Transverse colon (tissue), 4 donors: ENCODE measurements at regions of chr10 and their contacts with region 1.

Region 1: GRCh38 chr10:11687357-11688138 is 54.6 kb upstream of the ECHDC3 start:
- DNase-seq: peak; percentile 14
- H3K4me3 ChIP-seq: no peak overlapping the region
- H3K27ac ChIP-seq: no peak overlapping the region
- H3K4me1 ChIP-seq: peaks cover 0 to 34% (median 22%) of the 10 kb centered on the region in 4 donors
- H3K27me3 ChIP-seq: no peaks in the 10 kb centered on the region
- CTCF ChIP-seq: no peak
- EP300 ChIP-seq: no peak
- POLR2A ChIP-seq: no peak

Region 2: GRCh38 chr10:11499425-11500071 is 188.0 kb before region 1 on chr10:
- in situ Hi-C with region 1: no loop called
- intact Hi-C with region 1: no loop called
- DNase-seq: no peak
- H3K4me3 ChIP-seq: no peak overlapping the region
- H3K27ac ChIP-seq: no peak overlapping the region
- H3K4me1 ChIP-seq: no peaks in the 10 kb centered on the region
- H3K27me3 ChIP-seq: no peaks in the 10 kb centered on the region
- CTCF ChIP-seq: no peak
- EP300 ChIP-seq: no peak
- POLR2A ChIP-seq: no peak

Region 3: GRCh38 chr10:11647676-11648075 is 39.9 kb before region 1 on chr10:
- in situ Hi-C with region 1: no loop called
- intact Hi-C with region 1: no loop called
- DNase-seq: no peak
- H3K4me3 ChIP-seq: no peak overlapping the region
- H3K27ac ChIP-seq: no peak overlapping the region
- H3K4me1 ChIP-seq: no peaks in the 10 kb centered on the region
- H3K27me3 ChIP-seq: no peaks in the 10 kb centered on the region
- CTCF ChIP-seq: no peak
- EP300 ChIP-seq: no peak
- POLR2A ChIP-seq: no peak

Region 4: GRCh38 chr10:11707659-11708350 is 20.3 kb after region 1 on chr10:
- in situ Hi-C with region 1: no loop called
- intact Hi-C with region 1: loop called (anchors 2 kb)
- DNase-seq: peak; percentile 13
- H3K4me3 ChIP-seq: no peak overlapping the region
- H3K27ac ChIP-seq: no peak overlapping the region
- H3K4me1 ChIP-seq: peaks cover 0 to 3% (median 0%) of the 10 kb centered on the region in 4 donors
- H3K27me3 ChIP-seq: no peaks in the 10 kb centered on the region
- CTCF ChIP-seq: no peak
- EP300 ChIP-seq: no peak
- POLR2A ChIP-seq: no peak